ENCODE measurements at regions of chr6 and their contacts with region 1.

Region 1: GRCh38 chr6:17803409-17803808 is 96.7 kb upstream of the NUP153 start:
- DNase-seq: no peak
- H3K4me3 ChIP-seq: no peak overlapping the region
- H3K4me3 Mint-ChIP-seq: no peak overlapping the region
- H3K27ac ChIP-seq: no peak overlapping the region
- H3K27ac Mint-ChIP-seq: no peak overlapping the region
- H3K4me1 ChIP-seq: no peaks in the 10 kb centered on the region
- H3K4me1 Mint-ChIP-seq: peaks cover 0 to 3% (median 0%) of the 10 kb centered on the region in 4 donors
- H3K27me3 ChIP-seq: no peaks in the 10 kb centered on the region
- H3K27me3 Mint-ChIP-seq: peaks cover 5 to 11% of the 10 kb centered on the region in 2 donors

Region 2: GRCh38 chr6:17156112-17156921 is 647.1 kb before region 1 on chr6:
- CTCF ChIA-PET with region 1: interaction called, 22 read pairs
- POLR2A ChIA-PET with region 1: no interaction called
- intact Hi-C with region 1: loop called (anchors 2 kb)
- DNase-seq: peak; percentile 46 to 57 (median 49)
- H3K4me3 ChIP-seq: no peak overlapping the region
- H3K4me3 Mint-ChIP-seq: no peak overlapping the region
- H3K27ac ChIP-seq: no peak overlapping the region
- H3K27ac Mint-ChIP-seq: no peak overlapping the region
- H3K4me1 ChIP-seq: no peaks in the 10 kb centered on the region
- H3K4me1 Mint-ChIP-seq: no peaks in the 10 kb centered on the region
- H3K27me3 ChIP-seq: no peaks in the 10 kb centered on the region
- H3K27me3 Mint-ChIP-seq: peaks cover 13 to 20% of the 10 kb centered on the region in 2 donors

Region 3: GRCh38 chr6:17589406-17590096 is 213.9 kb before region 1 on chr6:
- CTCF ChIA-PET with region 1: interaction called, 72 read pairs
- POLR2A ChIA-PET with region 1: no interaction called
- intact Hi-C with region 1: loop called (anchors 1 kb)
- DNase-seq: peak in 4 of 5 donors; percentile 16 to 41 (median 34)
- H3K4me3 ChIP-seq: no peak overlapping the region
- H3K4me3 Mint-ChIP-seq: no peak overlapping the region
- H3K27ac ChIP-seq: no peak overlapping the region
- H3K27ac Mint-ChIP-seq: peak overlapping the region in 3 of 7 donors; percentile 15 to 71 (median 46)
- H3K4me1 ChIP-seq: peaks cover 7% of the 10 kb centered on the region
- H3K4me1 Mint-ChIP-seq: peaks cover 4 to 10% (median 7%) of the 10 kb centered on the region in 4 donors
- H3K27me3 ChIP-seq: no peaks in the 10 kb centered on the region
- H3K27me3 Mint-ChIP-seq: no peaks in the 10 kb centered on the region

Region 4: DNA sequence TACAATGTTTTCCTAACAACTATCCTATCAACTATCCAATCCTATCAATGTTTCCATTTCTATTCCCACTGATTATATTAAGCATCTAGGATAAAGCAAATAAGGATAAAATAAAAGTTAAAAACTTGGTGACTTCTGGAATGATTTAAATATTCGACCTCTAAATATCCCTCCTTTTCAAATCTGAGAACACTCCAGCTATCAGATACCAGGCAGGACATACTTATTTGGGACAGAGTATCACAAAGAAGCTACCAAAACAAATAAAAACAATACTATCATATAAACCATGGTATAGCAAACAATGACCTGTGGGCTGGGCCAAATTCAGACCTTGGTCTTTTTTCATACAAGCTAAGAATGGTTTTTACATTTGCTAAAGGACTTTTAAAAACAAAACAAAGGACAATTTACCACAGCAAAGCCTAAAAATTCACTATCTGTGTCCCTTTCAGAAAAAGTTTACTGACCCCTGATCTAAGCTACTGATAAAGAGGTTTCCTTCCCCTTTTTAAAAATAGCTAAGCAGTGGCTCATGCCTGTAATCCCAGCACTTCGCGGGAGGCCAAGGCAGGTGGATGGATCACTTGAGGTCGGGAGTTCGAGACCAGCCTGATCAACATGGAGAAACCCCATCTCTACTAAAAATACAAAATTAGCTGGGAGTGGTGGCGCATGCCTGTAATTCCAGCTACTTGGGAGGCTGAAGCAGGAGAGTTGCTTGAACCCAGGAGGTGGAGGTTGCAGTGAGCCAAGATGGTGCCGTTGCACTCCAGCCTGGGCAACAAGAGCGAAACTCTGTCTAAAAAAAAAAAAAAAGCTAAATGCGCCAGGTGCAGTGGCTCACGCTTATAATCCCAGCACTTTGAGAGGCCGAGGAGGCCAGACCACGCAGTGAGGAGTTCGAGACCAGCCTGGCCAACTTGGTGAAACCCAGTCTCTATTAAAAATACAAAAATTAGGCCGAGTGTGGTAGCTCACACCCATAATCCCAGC is 102.7 kb before region 1 on chr6:
- CTCF ChIA-PET with region 1: interaction called, 68 read pairs
- POLR2A ChIA-PET with region 1: interaction called, 3 read pairs
- intact Hi-C with region 1: loop called (anchors 1 kb)
- DNase-seq: no peak
- H3K4me3 ChIP-seq: no peak overlapping the region
- H3K4me3 Mint-ChIP-seq: peak overlapping the region in 4 of 8 donors; percentile 13 to 43 (median 23)
- H3K27ac ChIP-seq: peak overlapping the region; percentile 14
- H3K27ac Mint-ChIP-seq: peak overlapping the region in 6 of 7 donors; percentile 53 to 93 (median 78)
- H3K4me1 ChIP-seq: peaks cover 60% of the 10 kb centered on the region
- H3K4me1 Mint-ChIP-seq: peaks cover 30 to 77% (median 54%) of the 10 kb centered on the region in 4 donors
- H3K27me3 ChIP-seq: no peaks in the 10 kb centered on the region
- H3K27me3 Mint-ChIP-seq: no peaks in the 10 kb centered on the region

Region 5: GRCh38 chr6:17790489-17790888 is 12.9 kb before region 1 on chr6:
- CTCF ChIA-PET with region 1: interaction called, 17 read pairs
- POLR2A ChIA-PET with region 1: no interaction called
- intact Hi-C with region 1: no loop called
- DNase-seq: no peak
- H3K4me3 ChIP-seq: no peak overlapping the region
- H3K4me3 Mint-ChIP-seq: no peak overlapping the region
- H3K27ac ChIP-seq: no peak overlapping the region
- H3K27ac Mint-ChIP-seq: no peak overlapping the region
- H3K4me1 ChIP-seq: no peaks in the 10 kb centered on the region
- H3K4me1 Mint-ChIP-seq: no peaks in the 10 kb centered on the region
- H3K27me3 ChIP-seq: no peaks in the 10 kb centered on the region
- H3K27me3 Mint-ChIP-seq: peaks cover under 1 to 1% of the 10 kb centered on the region in 2 donors

Region 6: DNA sequence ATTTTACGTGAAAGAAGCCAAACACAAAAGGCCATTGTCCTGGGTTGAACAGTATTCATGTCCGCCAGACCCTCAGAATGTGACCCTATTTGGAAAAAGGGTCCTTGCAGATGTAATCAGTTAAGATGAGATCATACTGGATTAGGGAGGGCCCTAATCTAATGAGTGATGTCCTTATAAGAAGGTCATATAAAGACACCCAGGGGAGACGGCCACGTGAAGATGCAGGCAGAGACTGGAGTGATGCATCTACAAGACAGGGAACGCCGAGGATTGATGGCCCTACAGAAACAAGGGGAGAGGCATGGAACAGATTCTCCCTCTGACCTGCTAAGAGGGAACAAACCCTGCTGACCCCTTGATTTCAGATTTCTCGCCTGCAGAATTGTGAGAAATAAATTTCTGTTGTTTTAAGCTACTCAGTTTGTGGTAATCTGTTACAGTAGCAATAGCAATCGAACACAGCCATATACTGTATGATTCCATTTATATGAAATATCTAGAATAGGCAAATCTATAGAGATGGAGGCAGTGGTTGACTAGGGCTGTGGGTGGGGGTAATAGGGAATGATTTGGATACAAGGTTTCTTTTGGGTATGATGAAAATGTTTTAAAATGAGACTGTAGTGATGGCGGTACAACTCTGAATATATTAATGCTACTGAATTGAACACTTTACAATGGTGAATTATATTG is 36.3 kb after region 1 on chr6:
- CTCF ChIA-PET with region 1: no interaction called
- POLR2A ChIA-PET with region 1: no interaction called
- intact Hi-C with region 1: no loop called
- DNase-seq: no peak
- H3K4me3 ChIP-seq: no peak overlapping the region
- H3K4me3 Mint-ChIP-seq: no peak overlapping the region
- H3K27ac ChIP-seq: no peak overlapping the region
- H3K27ac Mint-ChIP-seq: peak overlapping the region in 1 of 7 donors; percentile 11
- H3K4me1 ChIP-seq: no peaks in the 10 kb centered on the region
- H3K4me1 Mint-ChIP-seq: peaks cover 0 to 3% (median 0%) of the 10 kb centered on the region in 4 donors
- H3K27me3 ChIP-seq: no peaks in the 10 kb centered on the region
- H3K27me3 Mint-ChIP-seq: peaks cover 8 to 9% of the 10 kb centered on the region in 2 donors

Region 7: DNA sequence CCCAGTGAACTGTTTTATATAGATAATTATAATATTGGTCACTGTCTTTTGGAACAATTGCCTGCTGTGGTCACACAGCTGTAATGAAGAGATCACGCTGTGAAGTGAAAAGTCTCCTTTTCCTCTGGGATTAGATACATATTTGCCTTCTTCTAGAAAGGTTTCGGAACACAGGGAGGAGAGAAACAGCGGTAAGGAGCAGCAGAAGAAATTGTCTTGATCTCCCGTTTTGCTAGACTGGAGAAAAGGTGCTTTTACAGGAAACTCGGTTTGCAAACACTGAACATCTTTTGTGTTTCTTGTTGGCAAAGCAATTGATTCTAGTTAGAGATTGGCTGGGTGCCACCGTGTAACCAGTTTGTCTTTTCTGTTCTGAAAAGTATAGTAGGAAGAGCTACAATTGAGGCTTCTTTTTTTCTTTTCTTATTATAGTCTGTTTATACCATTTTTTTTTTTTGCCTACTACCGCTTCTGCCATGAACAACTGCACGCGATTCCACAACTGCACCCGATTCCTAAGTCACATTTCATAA is 1629.6 kb after region 1 on chr6:
- CTCF ChIA-PET with region 1: no interaction called
- POLR2A ChIA-PET with region 1: no interaction called
- intact Hi-C with region 1: no loop called
- DNase-seq: no peak
- H3K4me3 ChIP-seq: no peak overlapping the region
- H3K4me3 Mint-ChIP-seq: no peak overlapping the region
- H3K27ac ChIP-seq: no peak overlapping the region
- H3K27ac Mint-ChIP-seq: no peak overlapping the region
- H3K4me1 ChIP-seq: no peaks in the 10 kb centered on the region
- H3K4me1 Mint-ChIP-seq: no peaks in the 10 kb centered on the region
- H3K27me3 ChIP-seq: no peaks in the 10 kb centered on the region
- H3K27me3 Mint-ChIP-seq: no peaks in the 10 kb centered on the region